ENCODE measurements at regions of chr10 and their contacts with region 1.

Region 1: DNA sequence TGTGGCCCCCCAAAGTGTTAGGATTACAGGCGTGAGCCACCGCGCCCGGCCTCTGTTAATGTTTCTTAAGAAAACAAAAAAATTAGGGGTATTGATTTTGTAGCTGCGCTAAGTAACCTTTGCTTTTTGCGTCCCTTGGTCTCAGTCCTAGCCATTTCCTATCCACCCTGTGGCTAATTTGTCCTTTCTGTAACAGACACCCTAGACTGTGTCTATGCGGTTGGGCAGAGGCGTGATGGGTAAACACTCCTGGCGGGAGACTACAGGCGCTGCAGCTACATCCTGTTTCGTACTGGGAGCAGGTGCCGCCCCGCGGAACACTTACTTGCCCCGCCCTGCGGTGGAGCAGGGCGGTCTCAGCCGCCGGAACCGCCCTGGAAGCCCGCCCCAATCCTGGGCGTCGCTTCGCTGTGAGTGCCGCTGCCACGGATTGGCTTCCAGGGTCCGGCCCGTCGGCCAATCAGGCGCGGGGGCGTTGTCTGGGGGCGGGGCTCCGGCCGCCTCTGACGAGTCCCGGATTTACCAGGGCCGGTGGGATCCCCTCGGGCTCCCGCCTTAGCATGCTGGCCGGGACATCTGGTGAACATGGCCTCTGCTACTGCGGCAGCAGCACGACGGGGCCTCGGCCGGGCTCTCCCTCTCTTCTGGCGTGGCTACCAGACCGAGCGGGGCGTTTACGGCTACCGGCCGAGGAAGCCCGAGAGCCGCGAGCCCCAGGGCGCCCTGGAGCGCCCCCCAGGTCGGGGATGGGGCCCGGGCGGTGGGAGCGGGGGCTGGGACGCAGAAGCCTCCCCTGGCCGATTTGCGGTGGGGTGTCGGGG is at the start of gene DHTKD1:
- DNase-seq: peak; percentile 99 to 100
- ATAC-seq: peak; percentile 100
- H3K4me3 ChIP-seq: peak within 1 kb of the TSS; percentile 99 to 100
- H3K27ac ChIP-seq: peak within 1 kb of the TSS in 1 of 2 donors; percentile 72
- H3K4me1 ChIP-seq: peaks cover 0 to 3% of the 10 kb centered on the region in 2 donors
- H3K27me3 ChIP-seq: no peaks in the 10 kb centered on the region
- total RNA-seq, gene DHTKD1: 16.2 to 20.2 TPM

Region 2: GRCh38 chr10:11602919-11603523 is 465.6 kb before region 1 on chr10:
- intact Hi-C with region 1: no loop called
- DNase-seq: no peak
- ATAC-seq: no peak
- H3K4me3 ChIP-seq: no peak overlapping the region
- H3K27ac ChIP-seq: no peak overlapping the region
- H3K4me1 ChIP-seq: no peaks in the 10 kb centered on the region
- H3K27me3 ChIP-seq: no peaks in the 10 kb centered on the region

Region 3: DNA sequence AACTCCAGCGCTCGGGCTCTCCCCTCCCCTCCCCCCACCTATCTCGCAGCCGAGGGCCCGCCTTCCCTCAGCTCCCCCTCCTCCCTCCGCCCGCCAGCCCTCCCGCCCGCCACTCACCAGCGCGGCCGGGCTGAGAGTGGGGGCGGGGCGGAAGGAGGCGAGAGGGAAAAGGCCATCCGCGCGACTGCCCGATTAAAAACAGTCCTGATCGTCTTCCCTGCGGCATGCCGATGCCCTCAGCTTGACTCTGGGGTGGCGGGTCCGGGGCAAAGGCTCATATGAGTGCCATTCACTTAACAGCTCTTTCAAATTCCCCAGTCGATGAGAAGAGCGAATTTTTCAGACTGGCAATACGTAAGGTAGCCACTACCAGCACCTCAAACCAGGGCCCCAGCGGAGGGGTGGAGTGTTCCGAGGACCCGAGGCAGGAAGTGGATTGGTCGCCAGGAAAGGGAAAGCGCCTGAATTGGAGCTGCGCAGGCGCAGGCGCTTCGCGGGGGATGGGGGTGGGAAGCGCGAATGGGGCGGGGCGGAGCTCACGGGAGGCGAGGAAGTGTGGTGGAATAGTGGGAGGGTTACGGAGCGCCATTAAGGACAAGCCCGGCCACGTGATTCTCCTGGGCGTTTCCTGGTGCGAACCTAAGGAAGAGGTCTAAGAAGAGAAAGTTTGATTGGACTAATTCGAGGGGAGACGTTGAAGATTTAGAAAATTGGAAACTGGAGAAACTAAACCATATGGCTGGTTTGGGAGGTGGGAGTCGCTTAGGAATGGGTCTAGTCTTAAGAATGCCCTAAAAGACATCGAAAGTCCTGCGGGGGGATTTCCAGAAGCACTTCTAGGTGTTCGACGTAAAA is 25.6 kb before region 1 on chr10 and contains the start of gene UPF2:
- intact Hi-C with region 1: loop called in 1 of 2 experiments (anchors 1 kb)
- DNase-seq: peak; percentile 99
- ATAC-seq: peak; percentile 98
- H3K4me3 ChIP-seq: peak within 1 kb of the TSS; percentile 88 to 98
- H3K27ac ChIP-seq: peak within 1 kb of the TSS in 1 of 2 donors; percentile 61
- H3K4me1 ChIP-seq: peaks cover 0 to 2% of the 10 kb centered on the region in 2 donors
- H3K27me3 ChIP-seq: no peaks in the 10 kb centered on the region
- total RNA-seq, gene UPF2: 17.8 to 26.1 TPM